ENCODE measurements at regions of chr6 and their contacts with region 1.

Region 1: GRCh38 chr6:154156135-154156896 is 117.3 kb downstream of the OPRM1 start:
- DNase-seq: peak; percentile 85
- H3K4me3 Mint-ChIP-seq: peak overlapping the region; percentile 67
- H3K27ac Mint-ChIP-seq: peak overlapping the region; percentile 65
- H3K4me1 Mint-ChIP-seq: peaks cover 25% of the 10 kb centered on the region
- H3K27me3 Mint-ChIP-seq: no peaks in the 10 kb centered on the region

Region 2: GRCh38 chr6:154276810-154277628 is 120.7 kb after region 1 on chr6:
- intact Hi-C with region 1: loop called (anchors 1 kb)
- DNase-seq: peak; percentile 56
- H3K4me3 Mint-ChIP-seq: peak overlapping the region; percentile 54
- H3K27ac Mint-ChIP-seq: peak overlapping the region; percentile 80
- H3K4me1 Mint-ChIP-seq: peaks cover 19% of the 10 kb centered on the region
- H3K27me3 Mint-ChIP-seq: peaks cover 15% of the 10 kb centered on the region

Region 3: GRCh38 chr6:154370545-154370944 is 214.2 kb after region 1 on chr6:
- intact Hi-C with region 1: loop called (anchors 1 kb)
- DNase-seq: peak; percentile 62
- H3K4me3 Mint-ChIP-seq: no peak overlapping the region
- H3K27ac Mint-ChIP-seq: no peak overlapping the region
- H3K4me1 Mint-ChIP-seq: no peaks in the 10 kb centered on the region
- H3K27me3 Mint-ChIP-seq: peaks cover 5% of the 10 kb centered on the region

Region 4: DNA sequence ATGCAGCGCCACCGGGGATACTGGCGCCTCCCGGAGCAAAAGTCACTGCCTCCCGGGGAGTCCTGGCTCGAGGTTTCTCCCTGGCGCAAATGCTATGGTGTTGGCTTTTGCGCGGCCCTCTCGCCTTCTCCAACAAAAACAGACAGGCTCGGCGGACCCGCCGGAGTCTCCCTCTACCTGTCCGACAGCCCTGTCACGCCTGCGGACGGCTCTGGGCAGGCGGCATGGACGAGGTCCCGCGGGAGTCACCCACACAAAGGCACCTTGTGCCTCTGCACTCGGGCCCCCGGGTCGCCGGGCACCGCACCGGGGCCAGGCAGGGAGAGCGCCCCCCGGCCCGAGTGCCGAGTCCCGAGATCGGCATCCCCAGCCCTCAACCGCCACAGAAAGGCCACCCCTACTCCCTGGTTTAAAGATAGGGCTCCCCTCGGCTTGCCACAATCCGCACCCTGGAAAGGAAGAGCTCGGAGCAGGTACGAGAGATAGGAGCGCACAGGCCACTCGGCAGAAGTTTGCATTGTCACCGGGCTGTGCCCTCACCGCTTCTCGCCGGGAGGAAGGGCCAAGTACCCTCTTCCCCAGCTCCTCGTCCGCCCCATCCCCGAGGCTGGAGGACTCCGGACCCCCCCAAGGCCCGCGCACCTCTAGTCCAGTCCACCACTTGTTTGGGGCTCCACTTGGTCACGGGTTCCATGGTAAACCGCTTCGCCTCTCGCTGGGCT is 353.3 kb after region 1 on chr6:
- intact Hi-C with region 1: loop called (anchors 10 kb)
- DNase-seq: no peak
- H3K4me3 Mint-ChIP-seq: peak overlapping the region; percentile 23
- H3K27ac Mint-ChIP-seq: no peak overlapping the region
- H3K4me1 Mint-ChIP-seq: peaks cover 4% of the 10 kb centered on the region
- H3K27me3 Mint-ChIP-seq: peaks cover 58% of the 10 kb centered on the region

Region 5: DNA sequence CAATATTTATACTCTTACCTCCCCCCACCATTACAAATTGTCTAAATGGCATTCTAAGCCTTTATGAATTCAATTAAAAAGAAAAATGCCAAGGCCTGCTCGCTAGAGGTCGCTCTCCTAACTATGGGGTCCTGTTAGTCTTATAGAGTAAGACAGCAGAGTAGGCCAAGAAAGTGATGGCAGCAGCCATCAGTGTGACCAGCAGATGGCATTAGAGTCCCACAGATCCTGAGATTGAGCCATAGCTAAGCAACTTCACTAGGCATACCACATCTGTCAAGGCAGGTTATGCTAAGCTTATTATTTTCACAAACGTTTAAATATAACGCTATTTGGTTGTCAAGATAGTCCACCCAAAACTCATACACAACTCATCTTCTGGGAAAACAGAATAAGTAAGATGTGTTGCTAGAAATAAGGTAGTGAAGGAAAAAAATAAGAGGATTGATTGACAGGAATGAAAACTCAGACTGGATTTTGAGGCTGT is 519.3 kb after region 1 on chr6:
- intact Hi-C with region 1: loop called (anchors 10 kb)
- DNase-seq: peak; percentile 96
- H3K4me3 Mint-ChIP-seq: no peak overlapping the region
- H3K27ac Mint-ChIP-seq: no peak overlapping the region
- H3K4me1 Mint-ChIP-seq: no peaks in the 10 kb centered on the region
- H3K27me3 Mint-ChIP-seq: peaks cover 2% of the 10 kb centered on the region